ENCODE measurements at regions of chr13 and their contacts with region 1.

Region 1: DNA sequence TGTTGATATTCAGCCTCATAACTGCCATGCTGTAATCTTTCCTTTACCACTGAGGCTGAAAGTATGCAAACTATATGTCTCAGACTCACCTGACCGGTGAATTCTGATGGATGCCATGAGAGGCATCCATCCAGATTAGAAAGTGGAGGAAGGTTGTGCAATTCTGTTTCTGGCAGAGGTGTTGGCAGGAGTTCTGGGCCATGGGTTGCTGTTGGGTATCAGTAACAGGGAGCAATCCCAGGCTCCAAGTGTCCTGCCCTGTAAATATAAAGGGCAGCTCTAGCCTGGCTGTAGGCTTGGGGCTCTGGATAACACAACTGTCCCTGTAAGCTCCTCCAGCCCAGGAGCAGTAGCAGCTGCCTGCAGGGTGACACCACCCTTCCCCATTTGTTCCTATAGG is 77.4 kb upstream of the ABCC4 start:
- H3K4me3 ChIP-seq: no peak overlapping the region
- H3K27ac ChIP-seq: no peak overlapping the region
- H3K4me1 ChIP-seq: 0 out of 2 replicates have a peak, but pooled peaks cover 2% of the 10 kb centered on the region
- CTCF ChIP-seq: no peak

Region 2: GRCh38 chr13:95197548-95197947 is 181.1 kb before region 1 on chr13:
- CTCF ChIA-PET with region 1: interaction called, 101 read pairs
- POLR2A ChIA-PET with region 1: no interaction called
- H3K4me3 ChIP-seq: no peak overlapping the region
- H3K27ac ChIP-seq: no peak overlapping the region
- H3K4me1 ChIP-seq: no peaks in the 10 kb centered on the region
- CTCF ChIP-seq: no peak

Region 3: DNA sequence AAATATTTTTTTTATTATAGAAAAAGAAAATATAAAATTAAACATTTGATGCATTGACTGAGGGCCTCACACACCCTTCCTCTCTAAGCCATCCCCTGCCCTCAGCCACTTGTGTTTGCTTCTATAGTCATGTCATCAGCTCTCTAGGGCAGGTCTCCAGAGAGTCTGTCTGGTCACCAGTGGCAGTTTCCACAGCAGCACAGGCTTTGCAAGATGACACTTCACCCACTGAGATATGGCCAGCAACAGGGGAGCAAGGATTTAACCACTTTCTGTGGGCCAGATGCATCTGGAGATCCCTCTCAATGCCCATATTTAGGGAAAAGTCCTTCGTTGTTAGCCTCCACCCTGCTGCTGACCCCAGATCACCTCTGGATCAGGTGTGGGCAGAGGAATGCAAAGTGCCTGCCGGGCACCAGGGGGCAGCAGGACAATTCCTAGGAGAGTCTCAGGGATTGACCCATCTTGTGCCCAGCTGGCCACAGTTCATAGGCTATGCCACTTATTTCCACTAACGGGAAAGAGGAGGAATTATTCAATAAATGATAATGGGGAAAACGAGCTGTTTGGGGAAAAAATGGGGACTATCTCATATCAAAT is 82.2 kb before region 1 on chr13:
- CTCF ChIA-PET with region 1: interaction called, 29 read pairs
- POLR2A ChIA-PET with region 1: interaction called, 3 read pairs
- H3K4me3 ChIP-seq: no peak overlapping the region
- H3K27ac ChIP-seq: no peak overlapping the region
- H3K4me1 ChIP-seq: peaks cover 7% of the 10 kb centered on the region; the same call in 1 of the 2 replicates
- CTCF ChIP-seq: no peak

Region 4: DNA sequence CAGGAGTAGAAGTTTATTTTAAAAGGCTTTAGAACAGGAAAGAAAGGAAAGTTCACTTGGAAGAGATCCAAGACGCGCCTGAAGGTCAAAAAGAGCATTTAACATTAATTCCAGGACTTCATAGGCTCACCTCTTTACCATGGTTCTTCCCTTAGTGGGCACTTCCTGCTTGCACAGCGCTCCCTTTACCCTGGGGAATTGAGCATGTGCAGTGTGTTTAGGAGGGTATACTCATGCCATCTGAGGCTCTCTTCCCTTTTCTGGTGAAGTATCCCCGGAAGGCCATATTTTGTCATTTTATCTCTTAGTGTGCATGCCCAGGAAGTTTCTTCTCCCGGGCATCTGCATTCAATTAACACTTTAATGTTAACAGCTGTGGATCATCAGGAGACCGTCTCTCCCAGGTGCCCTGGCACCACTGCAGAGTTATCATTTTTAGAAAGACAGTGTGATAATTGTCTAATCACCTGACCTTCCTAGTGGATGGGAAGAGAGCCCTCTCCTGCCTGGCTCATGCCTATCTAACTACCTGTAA is 11.2 kb before region 1 on chr13:
- CTCF ChIA-PET with region 1: interaction called, 11 read pairs
- POLR2A ChIA-PET with region 1: no interaction called
- H3K4me3 ChIP-seq: no peak overlapping the region
- H3K27ac ChIP-seq: no peak overlapping the region
- H3K4me1 ChIP-seq: no peaks in the 10 kb centered on the region
- CTCF ChIP-seq: no peak

Region 5: GRCh38 chr13:95391362-95391761 is 12.8 kb after region 1 on chr13:
- CTCF ChIA-PET with region 1: interaction called, 10 read pairs
- POLR2A ChIA-PET with region 1: no interaction called
- H3K4me3 ChIP-seq: no peak overlapping the region
- H3K27ac ChIP-seq: no peak overlapping the region
- H3K4me1 ChIP-seq: no peaks in the 10 kb centered on the region
- CTCF ChIP-seq: no peak

Region 6: GRCh38 chr13:95403828-95404522 is 25.4 kb after region 1 on chr13:
- CTCF ChIA-PET with region 1: interaction called, 28 read pairs
- POLR2A ChIA-PET with region 1: no interaction called
- H3K4me3 ChIP-seq: no peak overlapping the region
- H3K27ac ChIP-seq: no peak overlapping the region
- H3K4me1 ChIP-seq: no peaks in the 10 kb centered on the region
- CTCF ChIP-seq: no peak; the same call in 1 of the 2 replicates